Calu3 (cell line): ENCODE measurements at regions of chr12 and their contacts with region 1.

Region 1: DNA sequence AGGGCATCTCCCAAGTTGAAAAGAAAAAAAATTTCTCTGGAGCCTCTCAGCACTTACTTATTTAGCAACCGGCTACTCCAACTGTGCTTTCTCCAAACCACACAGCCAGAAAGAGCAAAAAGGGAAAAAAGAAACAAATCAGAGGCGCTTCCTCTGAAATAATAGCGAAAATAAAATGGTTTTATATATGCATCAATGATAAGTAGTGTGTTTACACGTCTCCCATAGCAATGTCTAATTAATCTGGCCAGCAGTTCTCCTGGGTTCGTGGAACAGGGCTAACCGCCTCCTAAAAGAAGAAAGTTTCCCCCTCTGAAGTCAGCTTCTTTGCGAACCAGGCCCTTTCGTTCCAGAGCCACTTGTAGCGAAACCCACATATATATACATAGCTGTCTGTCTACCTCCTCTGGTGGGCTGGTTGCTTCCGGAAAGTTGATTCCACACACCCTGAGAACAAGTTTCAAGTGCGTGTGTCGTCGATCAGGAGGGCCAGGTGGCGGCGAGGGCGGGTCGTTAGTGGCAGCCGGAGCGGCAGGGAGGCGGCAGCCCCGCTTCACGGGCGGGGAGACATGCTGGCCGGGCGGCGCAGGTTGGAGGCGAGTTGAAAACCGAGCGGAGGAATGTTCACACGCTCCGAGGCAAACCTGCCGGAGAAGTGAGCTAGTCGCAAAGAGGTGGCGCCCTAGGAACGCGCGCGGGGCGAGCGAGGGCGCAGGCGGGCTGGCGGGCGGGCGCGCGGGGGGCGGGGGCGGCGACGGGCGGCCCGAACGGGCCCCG is 2.7 kb downstream of the PTHLH start:
- DNase-seq: peak; percentile 78
- H3K4me3 Mint-ChIP-seq: peak overlapping the region; percentile 74
- H3K27ac Mint-ChIP-seq: peak overlapping the region; percentile 38
- H3K4me1 Mint-ChIP-seq: peaks cover 13% of the 10 kb centered on the region
- H3K27me3 Mint-ChIP-seq: peaks cover 33% of the 10 kb centered on the region
- CTCF ChIP-seq: no peak

Region 2: DNA sequence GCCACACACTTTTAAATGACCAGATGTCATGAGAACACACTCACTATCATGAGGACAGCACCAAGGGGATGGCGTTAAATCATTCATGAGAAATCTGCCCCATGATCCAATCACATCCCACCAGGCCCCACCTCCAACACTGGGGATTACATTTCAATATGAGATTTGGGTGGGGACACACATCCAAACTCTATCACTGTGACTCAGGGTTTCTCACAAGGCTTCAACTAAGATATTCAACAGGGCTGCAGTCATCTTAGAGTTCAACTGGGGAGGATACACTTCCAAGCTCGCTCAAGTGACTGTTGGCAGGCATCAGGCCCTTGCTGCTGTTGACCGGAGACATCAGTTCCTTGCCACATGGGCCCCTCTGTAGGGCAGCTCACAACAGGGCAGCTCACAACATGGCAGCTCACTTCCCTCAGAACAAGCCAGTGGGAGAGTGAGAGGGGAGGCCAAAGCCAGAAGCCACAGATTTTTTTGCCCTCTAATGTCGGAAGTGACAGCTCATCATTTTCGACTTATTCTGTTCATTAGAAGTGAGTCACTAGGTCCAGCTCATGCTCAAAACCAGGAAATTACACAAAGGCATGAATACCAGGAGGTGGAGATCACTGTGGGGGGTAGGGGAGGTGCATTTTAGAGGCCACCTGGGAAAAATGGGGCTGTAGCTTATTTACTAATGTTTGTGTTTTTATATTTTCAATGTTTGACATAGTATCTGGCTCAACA is 53.5 kb after region 1 on chr12:
- CTCF ChIA-PET with region 1: interaction called, 3 read pairs
- intact Hi-C with region 1: loop called (anchors 5 kb)
- DNase-seq: peak; percentile 71
- H3K4me3 Mint-ChIP-seq: no peak overlapping the region
- H3K27ac Mint-ChIP-seq: peak overlapping the region; percentile 86
- H3K4me1 Mint-ChIP-seq: peaks cover 42% of the 10 kb centered on the region
- H3K27me3 Mint-ChIP-seq: no peaks in the 10 kb centered on the region
- CTCF ChIP-seq: no peak

Region 3: DNA sequence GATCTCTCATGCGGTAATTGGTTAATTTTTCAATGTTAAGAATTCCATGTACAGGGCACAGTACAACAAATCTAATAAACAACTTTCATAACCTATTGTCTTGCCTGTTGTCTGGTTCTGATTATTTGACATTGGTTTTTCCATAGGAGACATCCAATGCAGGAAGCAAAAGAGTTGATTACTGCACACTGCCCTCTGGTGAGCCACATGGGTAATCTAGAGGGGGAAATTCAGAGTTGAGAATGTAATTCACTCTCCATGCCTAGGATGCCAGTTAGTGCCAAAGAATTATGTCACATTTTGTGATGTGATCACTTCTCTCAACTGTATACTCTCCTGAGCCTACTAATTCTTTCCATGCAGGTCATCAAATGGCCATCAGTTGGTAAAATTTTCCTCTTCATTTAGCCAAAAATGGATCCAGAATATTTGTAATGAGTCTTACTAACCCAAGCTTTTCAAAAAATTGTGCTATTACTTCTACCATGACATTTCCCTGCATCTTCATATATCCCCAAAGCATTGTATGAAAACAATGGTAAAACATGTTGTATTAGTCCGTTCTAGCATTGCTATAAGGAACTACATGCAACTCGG is 202.7 kb after region 1 on chr12:
- CTCF ChIA-PET with region 1: interaction called, 4 read pairs
- intact Hi-C with region 1: loop called (anchors 5 kb)
- DNase-seq: peak; percentile 43
- H3K4me3 Mint-ChIP-seq: no peak overlapping the region
- H3K27ac Mint-ChIP-seq: no peak overlapping the region
- H3K4me1 Mint-ChIP-seq: no peaks in the 10 kb centered on the region
- H3K27me3 Mint-ChIP-seq: no peaks in the 10 kb centered on the region
- CTCF ChIP-seq: peak; percentile 31